ENCODE measurements at regions of chr17 and their contacts with region 1.

Region 1: DNA sequence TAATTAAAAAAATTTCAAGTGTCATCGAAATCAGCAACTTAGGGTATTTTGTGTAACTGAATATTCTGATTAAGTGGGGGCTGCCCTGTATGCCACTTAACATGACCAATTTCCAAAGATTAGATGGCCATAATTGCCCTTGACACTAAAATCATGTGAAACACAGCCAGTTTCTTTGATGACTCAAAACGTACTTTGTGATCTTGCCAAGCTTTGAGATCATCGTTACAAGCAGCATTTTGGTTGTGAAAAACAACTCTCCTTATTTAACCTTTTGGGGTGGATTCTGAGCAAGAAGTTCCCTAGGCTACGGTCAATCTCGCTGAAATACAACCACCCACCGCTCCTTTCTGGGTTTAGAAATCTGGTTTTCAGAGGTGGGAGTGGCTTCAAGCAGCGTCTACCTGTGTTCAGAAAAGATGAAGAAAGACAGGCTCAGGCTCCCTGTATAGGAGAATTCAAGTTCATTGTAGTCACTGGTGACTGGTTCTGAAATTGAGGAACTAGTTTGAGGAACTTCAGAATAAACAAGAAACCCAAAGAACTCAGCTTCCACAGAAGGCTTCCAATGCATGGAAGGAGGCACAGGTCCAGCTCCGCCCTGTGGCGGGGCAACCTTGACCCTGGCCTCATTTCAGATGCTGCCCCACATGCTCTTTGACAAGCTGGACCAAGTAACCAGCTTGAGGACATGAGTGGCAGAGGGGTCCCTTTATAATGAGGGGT is 9.4 kb downstream of the MAP3K14 start:
- DNase-seq: peak; percentile 67
- H3K4me3 Mint-ChIP-seq: peak overlapping the region; percentile 47
- H3K27ac Mint-ChIP-seq: peak overlapping the region; percentile 89
- H3K4me1 Mint-ChIP-seq: peaks cover 88% of the 10 kb centered on the region
- H3K27me3 Mint-ChIP-seq: no peaks in the 10 kb centered on the region

Region 2: GRCh38 chr17:45228763-45229539 is 78.5 kb before region 1 on chr17:
- intact Hi-C with region 1: loop called (anchors 2 kb)
- DNase-seq: peak; percentile 81
- H3K4me3 Mint-ChIP-seq: peak overlapping the region; percentile 99
- H3K27ac Mint-ChIP-seq: peak overlapping the region; percentile 97
- H3K4me1 Mint-ChIP-seq: peaks cover 94% of the 10 kb centered on the region
- H3K27me3 Mint-ChIP-seq: no peaks in the 10 kb centered on the region

Region 3: GRCh38 chr17:45277216-45277849 is 30.1 kb before region 1 on chr17:
- intact Hi-C with region 1: loop called (anchors 2 kb)
- DNase-seq: peak; percentile 79
- H3K4me3 Mint-ChIP-seq: no peak overlapping the region
- H3K27ac Mint-ChIP-seq: peak overlapping the region; percentile 20
- H3K4me1 Mint-ChIP-seq: peaks cover 12% of the 10 kb centered on the region
- H3K27me3 Mint-ChIP-seq: no peaks in the 10 kb centered on the region

Region 4: DNA sequence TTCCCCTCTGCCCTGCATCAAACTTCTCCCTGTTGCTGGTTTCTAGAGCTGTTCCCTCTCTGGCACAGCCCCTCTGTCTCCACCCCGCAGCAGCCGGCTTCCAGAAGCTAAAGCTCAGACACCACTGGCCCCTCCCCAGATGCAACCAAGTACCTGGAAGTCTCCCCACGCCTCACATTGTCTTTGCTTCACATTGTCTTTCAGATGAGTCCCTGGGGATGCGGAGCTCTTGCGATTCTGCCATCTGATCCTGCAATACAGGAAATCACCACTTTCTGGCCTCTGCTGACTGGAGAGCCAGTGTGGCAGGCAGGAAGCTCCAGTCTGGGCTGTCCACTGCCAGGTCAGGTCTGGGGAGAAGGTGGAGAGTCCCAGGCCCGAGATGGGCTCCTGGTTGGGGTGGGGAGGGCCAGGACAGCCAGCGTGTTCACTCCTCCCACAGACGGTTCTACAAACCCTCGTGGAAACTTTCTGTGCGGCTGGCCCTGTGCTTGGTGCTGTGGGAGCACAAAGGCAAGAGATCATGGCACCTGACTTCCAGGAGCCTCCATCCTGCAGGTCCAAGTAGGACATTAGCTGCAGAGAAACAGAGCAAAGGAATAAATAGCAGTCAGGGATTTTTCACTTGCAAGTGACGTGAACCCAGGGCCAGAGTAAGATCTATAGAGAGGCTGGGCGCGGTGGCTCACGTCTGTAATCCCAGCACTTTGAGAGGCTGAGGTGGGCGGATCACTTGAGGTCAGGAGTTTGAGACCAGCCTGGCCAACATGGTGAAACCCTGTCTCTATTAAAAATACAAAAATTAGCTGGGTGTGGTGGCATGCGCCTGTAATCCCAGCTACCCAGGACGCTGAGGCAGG is 57.3 kb after region 1 on chr17:
- intact Hi-C with region 1: no loop called
- DNase-seq: no peak
- H3K4me3 Mint-ChIP-seq: no peak overlapping the region
- H3K27ac Mint-ChIP-seq: no peak overlapping the region
- H3K4me1 Mint-ChIP-seq: no peaks in the 10 kb centered on the region
- H3K27me3 Mint-ChIP-seq: peaks cover 23% of the 10 kb centered on the region

Measured in activated T-helper 1 cell treated with anti-CD3 and anti-CD28 coated beads, Interleukin-12 subunit alpha, Interleukin-12 subunit beta, Interleukin-2, Interleukin-4 antibody, amounts not matched to agents 30 ng/mL and 10 ng/mL and 1 ng/mL, durations not matched to agents 14 hours and 24 hours and 36 hours (primary cell).